WTC11 (cell line): ENCODE measurements at regions of chr15 and their contacts with region 1.

Region 1: DNA sequence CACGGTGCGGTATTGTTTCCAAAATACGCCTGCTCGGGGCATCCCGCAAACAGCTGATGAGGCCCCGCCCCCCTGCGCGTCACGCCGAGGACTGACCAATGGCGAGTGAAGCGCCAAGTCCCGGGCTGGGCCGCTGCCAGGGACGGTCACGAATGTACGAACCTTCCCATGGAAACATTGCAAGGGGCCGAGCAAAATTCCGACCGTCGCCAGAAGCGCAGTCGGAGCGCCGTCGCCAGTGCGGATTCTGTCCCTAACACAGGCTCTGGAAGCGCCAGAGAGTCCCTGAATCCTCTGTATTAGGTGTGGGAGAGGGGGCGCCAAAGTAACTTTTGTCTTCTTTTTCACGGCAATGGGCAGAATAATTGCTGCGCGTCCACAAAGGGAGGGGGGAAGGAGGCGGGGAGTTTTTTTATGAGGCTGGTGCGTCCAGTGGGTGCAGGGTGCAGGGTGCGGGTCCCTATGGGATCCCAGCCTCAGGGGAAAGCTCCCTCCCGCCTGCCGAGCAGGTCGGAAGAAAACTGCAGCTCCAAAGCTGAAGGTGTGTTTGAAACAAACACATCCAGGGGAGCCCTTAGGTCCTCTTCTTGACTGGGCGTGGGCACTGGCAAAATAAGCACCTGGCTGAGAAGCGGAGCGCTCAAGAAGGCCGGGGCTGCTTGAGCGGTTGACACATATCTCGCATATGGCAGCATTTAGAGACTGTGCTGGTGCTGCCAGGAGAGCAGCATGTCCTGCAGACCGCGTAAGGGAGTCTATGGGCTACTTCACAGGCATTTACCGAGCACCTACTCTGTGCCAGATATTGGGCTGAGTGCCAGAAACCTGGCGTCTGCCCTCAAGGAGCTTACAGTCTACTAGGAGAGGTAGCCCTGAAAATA is at the start of gene BMF:
- DNase-seq: peak; percentile 100
- ATAC-seq: peak; percentile 70
- H3K4me3 Mint-ChIP-seq: peak within 1 kb of the TSS; percentile 89
- H3K27ac Mint-ChIP-seq: peak within 1 kb of the TSS; percentile 95
- H3K4me1 Mint-ChIP-seq: peaks cover 69% of the 10 kb centered on the region
- H3K27me3 Mint-ChIP-seq: peaks cover 2% of the 10 kb centered on the region; the same call in 1 of the 2 replicates
- CTCF ChIP-seq: no peak
- total RNA-seq, gene BMF: 32.9 to 36.9 TPM (median 36.6 TPM) in 3 replicates

Region 2: GRCh38 chr15:40038638-40039543 is 70.2 kb before region 1 on chr15 and contains the start of gene SRP14:
- CTCF ChIA-PET with region 1: interaction called, 14 read pairs
- POLR2A ChIA-PET with region 1: no interaction called
- DNase-seq: peak; percentile 95
- ATAC-seq: peak; percentile 97
- H3K4me3 Mint-ChIP-seq: peak within 1 kb of the TSS; percentile 90
- H3K27ac Mint-ChIP-seq: peak within 1 kb of the TSS; percentile 96
- H3K4me1 Mint-ChIP-seq: peaks cover 20% of the 10 kb centered on the region
- H3K27me3 Mint-ChIP-seq: no peaks in the 10 kb centered on the region
- CTCF ChIP-seq: no peak
- total RNA-seq, gene SRP14: 190 to 199 TPM (median 192 TPM) in 3 replicates

Region 3: DNA sequence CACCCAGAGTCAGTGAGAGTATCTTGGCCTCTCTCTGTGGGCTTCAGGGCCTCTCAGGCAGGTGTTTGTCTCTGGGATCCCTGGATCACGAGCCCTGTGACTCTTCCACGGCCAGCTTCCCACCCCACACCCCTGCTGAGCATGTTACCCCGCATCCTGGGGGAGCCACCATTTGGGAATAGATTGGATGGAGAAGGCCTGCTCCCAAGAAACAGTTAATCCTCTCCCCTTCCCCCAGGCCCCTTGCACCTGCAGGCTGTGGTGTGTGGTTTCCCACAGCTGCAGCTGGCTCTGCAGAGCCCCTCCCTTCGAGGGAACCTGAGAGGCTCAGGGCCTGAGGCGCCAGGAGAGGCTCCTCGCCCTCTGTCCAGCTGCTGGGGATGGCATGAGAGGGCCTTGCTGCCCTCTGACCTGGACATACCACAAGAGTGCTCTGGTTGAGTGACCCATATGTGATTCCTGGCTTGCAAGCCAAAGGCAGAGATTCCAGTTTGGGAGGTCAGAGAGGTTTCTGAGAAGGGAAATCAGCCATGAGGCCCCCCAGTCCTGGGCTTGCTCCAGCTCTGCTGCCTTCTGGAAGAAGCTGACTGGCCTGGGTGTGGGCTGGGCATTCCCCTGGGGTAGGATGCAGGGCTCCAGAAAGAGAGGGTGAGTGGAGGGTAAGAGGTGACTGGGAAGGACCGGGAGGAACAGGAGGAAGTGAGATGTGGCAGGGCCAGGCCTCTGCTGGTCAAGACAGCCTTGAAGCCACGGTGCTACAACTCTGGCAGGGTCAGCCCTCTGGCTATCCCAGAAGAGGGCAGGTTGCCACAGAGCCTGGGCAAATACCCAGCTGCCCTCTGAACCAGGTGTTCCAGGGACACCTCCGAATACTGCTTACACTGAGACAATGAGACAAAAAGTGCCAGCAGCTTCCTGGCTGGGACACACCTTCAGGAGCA is 54.2 kb before region 1 on chr15:
- CTCF ChIA-PET with region 1: interaction called, 120 read pairs
- POLR2A ChIA-PET with region 1: interaction called, 4 read pairs
- DNase-seq: no peak
- ATAC-seq: no peak
- H3K4me3 Mint-ChIP-seq: no peak overlapping the region
- H3K27ac Mint-ChIP-seq: peak overlapping the region; percentile 93
- H3K4me1 Mint-ChIP-seq: peaks cover 30% of the 10 kb centered on the region
- H3K27me3 Mint-ChIP-seq: no peaks in the 10 kb centered on the region
- CTCF ChIP-seq: no peak

Region 4: DNA sequence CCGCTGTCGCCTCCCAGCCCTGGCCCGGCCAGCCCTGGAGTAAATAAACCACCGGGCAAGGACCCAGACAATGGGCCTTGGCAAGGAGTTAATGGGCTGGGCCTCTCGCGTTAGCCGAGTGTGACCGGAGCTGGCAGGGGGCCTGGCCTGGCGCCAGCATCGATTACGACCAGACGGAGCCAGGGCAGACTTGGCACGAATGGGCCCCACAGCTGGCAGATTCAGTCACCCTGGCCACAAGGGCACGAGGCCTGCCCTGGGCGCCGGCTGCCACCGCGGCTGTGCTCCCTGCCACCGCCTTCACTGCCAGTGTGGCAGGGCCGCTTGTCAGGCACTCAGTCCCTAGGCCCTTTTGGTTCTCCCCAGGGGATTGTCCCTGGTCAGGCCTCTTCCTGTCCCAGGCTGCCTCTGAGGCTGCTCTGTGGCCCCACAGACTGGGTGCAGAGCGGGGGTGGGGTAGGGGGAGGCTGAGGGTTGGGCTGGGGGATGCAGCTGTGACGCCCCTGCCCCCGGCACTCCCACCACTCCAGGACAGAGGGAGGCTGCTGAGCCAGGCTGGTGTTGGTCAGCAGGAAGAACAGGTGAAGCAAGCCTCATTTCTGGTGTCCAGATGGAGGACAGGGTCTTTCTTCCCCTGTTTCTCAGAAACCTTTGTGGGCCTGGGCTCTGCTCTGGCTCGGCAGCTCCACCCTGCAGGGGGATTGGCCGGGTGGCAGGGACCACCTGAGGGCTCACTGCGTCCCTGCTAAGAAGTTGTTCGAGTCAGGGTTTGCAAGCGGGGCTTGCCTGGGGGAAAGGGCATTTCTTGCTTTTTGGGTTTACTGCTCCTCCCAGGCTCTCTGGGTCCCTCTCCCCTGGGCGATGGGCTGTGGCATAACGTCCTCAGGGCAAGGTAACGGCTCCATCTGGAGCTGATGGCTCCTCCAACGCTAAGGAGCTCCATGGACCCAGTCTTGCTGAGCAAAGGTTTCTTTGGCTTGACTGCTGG is 39.6 kb before region 1 on chr15:
- CTCF ChIA-PET with region 1: interaction called, 85 read pairs
- POLR2A ChIA-PET with region 1: interaction called, 4 read pairs
- DNase-seq: peak; percentile 56
- ATAC-seq: peak; percentile 68
- H3K4me3 Mint-ChIP-seq: no peak overlapping the region
- H3K27ac Mint-ChIP-seq: peak overlapping the region; percentile 11; the same call in 1 of the 2 replicates
- H3K4me1 Mint-ChIP-seq: peaks cover 33% of the 10 kb centered on the region
- H3K27me3 Mint-ChIP-seq: peaks cover 4% of the 10 kb centered on the region; the same call in 1 of the 2 replicates
- CTCF ChIP-seq: no peak

Region 5: GRCh38 chr15:40081691-40082194 is 27.4 kb before region 1 on chr15:
- CTCF ChIA-PET with region 1: interaction called, 50 read pairs
- POLR2A ChIA-PET with region 1: interaction called, 3 read pairs
- DNase-seq: peak; percentile 64
- ATAC-seq: peak; percentile 92
- H3K4me3 Mint-ChIP-seq: peak overlapping the region; percentile 41
- H3K27ac Mint-ChIP-seq: peak overlapping the region; percentile 12; the same call in 1 of the 2 replicates
- H3K4me1 Mint-ChIP-seq: peaks cover 36% of the 10 kb centered on the region
- H3K27me3 Mint-ChIP-seq: peaks cover 28% of the 10 kb centered on the region
- CTCF ChIP-seq: no peak

Region 6: DNA sequence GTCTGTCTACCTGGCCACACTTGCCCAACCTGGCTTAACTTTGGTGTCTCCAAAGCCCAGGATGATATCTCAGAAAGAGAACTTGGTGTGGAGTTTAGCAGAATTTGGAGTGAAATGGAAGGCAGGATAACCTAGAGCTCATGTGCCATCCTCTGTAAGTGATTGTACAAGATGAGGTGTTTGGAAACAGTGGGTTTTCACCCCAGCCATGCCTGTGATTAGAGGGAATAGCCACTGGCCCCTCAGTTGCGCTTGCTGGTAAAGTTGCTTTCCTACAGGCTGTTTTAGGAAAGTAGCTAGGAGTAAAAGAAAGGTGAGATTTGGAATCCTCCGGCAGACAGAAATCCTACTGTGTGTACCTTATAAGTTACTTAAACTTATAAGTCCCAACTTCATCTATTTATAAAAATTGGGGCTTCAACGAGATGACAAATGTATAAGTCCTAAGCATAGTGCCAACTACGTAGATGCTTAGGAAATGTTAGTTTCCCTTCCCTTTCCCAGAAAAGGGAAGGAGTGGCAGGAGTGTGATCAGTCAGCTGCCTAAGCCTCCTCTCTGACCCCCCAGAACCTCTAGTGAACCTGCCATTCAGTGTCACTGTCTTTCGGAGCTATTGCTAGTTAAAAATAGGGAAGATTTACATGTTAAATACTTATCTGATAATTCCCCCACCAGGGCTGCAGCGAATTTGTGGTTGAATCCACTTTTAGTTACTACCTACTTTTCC is 13.0 kb after region 1 on chr15:
- CTCF ChIA-PET with region 1: interaction called, 17 read pairs
- POLR2A ChIA-PET with region 1: interaction called, 4 read pairs
- DNase-seq: no peak
- ATAC-seq: no peak
- H3K4me3 Mint-ChIP-seq: no peak overlapping the region
- H3K27ac Mint-ChIP-seq: no peak overlapping the region; the same call in 1 of the 2 replicates
- H3K4me1 Mint-ChIP-seq: peaks cover 44% of the 10 kb centered on the region
- H3K27me3 Mint-ChIP-seq: no peaks in the 10 kb centered on the region
- CTCF ChIP-seq: no peak

Region 7: DNA sequence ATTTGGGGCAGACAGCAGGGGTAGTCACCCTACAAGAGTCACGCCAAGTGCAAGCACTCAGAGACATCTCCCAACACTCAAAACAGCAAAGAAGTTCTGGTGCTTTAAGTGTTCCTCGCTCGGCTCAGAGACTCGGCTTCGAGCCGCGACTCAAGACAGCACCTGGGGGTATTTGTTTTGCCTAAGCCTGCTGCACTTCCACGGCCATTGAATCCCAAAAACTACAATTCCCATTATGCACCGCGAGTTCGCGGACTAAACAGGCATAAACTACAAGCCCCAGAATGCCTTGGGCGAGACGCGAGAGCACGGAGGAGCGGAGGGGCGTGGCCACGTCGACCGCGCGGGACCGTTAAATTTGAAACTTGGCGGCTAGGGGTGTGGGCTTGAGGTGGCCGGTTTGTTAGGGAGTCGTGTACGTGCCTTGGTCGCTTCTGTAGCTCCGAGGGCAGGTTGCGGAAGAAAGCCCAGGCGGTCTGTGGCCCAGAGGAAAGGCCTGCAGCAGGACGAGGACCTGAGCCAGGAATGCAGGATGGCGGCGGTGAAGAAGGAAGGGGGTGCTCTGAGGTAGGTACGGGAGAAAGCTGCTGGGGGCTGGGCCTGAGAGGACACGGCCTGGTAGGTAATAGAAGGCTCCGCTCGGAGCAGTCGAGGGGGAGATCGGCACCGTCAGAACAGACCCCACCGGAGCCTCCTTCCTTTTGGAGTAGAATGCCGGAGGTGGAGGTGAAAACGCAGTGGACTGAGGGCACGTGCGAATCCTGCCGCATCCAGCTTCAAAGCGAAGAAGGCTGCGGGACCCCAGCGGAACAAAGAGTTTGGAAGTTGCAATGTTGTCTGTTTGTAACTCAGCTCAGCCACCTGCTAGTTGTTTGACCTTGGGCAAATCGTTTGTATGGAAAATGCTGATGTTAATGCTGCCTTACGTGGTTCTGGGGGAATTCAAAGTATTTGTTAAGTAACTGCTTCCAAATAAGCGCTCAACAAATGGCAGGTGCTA is 51.9 kb after region 1 on chr15 and contains the start of gene BUB1B:
- CTCF ChIA-PET with region 1: interaction called, 38 read pairs
- POLR2A ChIA-PET with region 1: interaction called, 33 read pairs
- DNase-seq: peak; percentile 95
- ATAC-seq: peak; percentile 94
- H3K4me3 Mint-ChIP-seq: no peak within 1 kb of the TSS
- H3K27ac Mint-ChIP-seq: no peak within 1 kb of the TSS
- H3K4me1 Mint-ChIP-seq: peaks cover 37% of the 10 kb centered on the region
- H3K27me3 Mint-ChIP-seq: no peaks in the 10 kb centered on the region
- CTCF ChIP-seq: no peak
- total RNA-seq, gene BUB1B: 148 to 192 TPM (median 156 TPM) in 3 replicates